ENCODE measurements at regions of chr2 and their contacts with region 1.

Region 1: GRCh38 chr2:8303322-8303832 is 378.5 kb upstream of the ID2 start:
- DNase-seq: peak; percentile 39
- ATAC-seq: peak; percentile 83
- H3K4me3 Mint-ChIP-seq: peak overlapping the region; percentile 38
- H3K27ac Mint-ChIP-seq: peak overlapping the region; percentile 59
- H3K4me1 Mint-ChIP-seq: peaks cover 43% of the 10 kb centered on the region
- H3K27me3 Mint-ChIP-seq: peaks cover 63% of the 10 kb centered on the region
- CTCF ChIP-seq: no peak

Region 2: DNA sequence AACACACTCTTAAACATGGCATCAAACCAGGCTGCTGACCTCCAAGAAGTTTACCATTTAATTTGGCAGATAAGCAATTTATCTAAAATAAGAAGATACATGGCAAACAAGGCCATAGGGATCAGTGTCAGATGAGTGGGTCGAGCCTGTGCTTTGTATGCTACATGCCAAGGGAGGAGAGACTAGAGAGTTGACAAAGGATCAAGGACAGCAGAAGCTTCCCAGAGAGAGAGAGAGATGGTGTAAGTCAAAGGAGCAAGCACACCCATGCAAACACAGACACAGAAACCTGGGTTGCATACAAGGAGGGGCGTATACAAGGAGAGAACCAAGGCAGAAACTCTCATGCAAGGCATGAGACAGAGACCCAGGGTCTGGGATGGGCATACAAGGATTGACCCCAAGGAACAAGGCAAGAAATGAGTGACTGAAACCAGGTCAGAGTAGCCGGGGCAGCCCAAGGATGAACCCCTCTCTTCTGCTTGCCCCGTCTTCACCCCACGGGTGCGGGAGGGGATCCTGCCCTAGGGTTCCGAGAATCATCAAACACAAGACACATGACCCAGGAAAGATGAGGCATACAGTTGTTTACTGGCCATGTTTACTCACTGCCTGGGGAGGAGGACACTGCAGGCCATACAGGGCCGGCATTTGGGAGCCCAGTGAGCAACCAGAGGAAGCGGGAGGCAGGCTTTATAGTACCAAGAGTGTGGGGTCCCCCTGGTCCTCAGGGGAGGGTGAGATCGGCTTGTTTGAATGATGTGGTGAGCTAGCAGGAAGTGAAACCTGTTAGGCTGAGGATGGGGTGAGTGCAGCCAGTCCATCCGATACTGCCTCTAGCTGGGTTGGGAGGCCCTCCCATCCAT is 150.8 kb before region 1 on chr2:
- CTCF ChIA-PET with region 1: no interaction called
- POLR2A ChIA-PET with region 1: no interaction called
- intact Hi-C with region 1: loop called (anchors 2 kb)
- DNase-seq: no peak
- ATAC-seq: peak; percentile 87
- H3K4me3 Mint-ChIP-seq: no peak overlapping the region
- H3K27ac Mint-ChIP-seq: no peak overlapping the region
- H3K4me1 Mint-ChIP-seq: peaks cover 19% of the 10 kb centered on the region
- H3K27me3 Mint-ChIP-seq: peaks cover 32% of the 10 kb centered on the region
- CTCF ChIP-seq: no peak

Region 3: GRCh38 chr2:8239531-8240088 is 63.8 kb before region 1 on chr2:
- CTCF ChIA-PET with region 1: no interaction called
- POLR2A ChIA-PET with region 1: no interaction called
- intact Hi-C with region 1: no loop called
- DNase-seq: no peak
- ATAC-seq: no peak
- H3K4me3 Mint-ChIP-seq: no peak overlapping the region
- H3K27ac Mint-ChIP-seq: no peak overlapping the region
- H3K4me1 Mint-ChIP-seq: peaks cover 10% of the 10 kb centered on the region
- H3K27me3 Mint-ChIP-seq: peaks cover 54% of the 10 kb centered on the region
- CTCF ChIP-seq: no peak

Region 4: GRCh38 chr2:8583400-8584173 is 280.2 kb after region 1 on chr2:
- CTCF ChIA-PET with region 1: no interaction called
- POLR2A ChIA-PET with region 1: no interaction called
- intact Hi-C with region 1: loop called (anchors 2 kb)
- DNase-seq: peak; percentile 80
- ATAC-seq: peak; percentile 94
- H3K4me3 Mint-ChIP-seq: peak overlapping the region; percentile 64
- H3K27ac Mint-ChIP-seq: peak overlapping the region; percentile 27
- H3K4me1 Mint-ChIP-seq: peaks cover 47% of the 10 kb centered on the region
- H3K27me3 Mint-ChIP-seq: peaks cover 18% of the 10 kb centered on the region
- CTCF ChIP-seq: no peak

Region 5: GRCh38 chr2:10043906-10044601 is 1740.7 kb after region 1 on chr2:
- CTCF ChIA-PET with region 1: no interaction called
- POLR2A ChIA-PET with region 1: no interaction called
- intact Hi-C with region 1: no loop called
- DNase-seq: peak; percentile 88
- ATAC-seq: peak; percentile 68
- H3K4me3 Mint-ChIP-seq: peak overlapping the region; percentile 76
- H3K27ac Mint-ChIP-seq: peak overlapping the region; percentile 72
- H3K4me1 Mint-ChIP-seq: peaks cover 26% of the 10 kb centered on the region
- H3K27me3 Mint-ChIP-seq: no peaks in the 10 kb centered on the region
- CTCF ChIP-seq: no peak

Measured in activated B cell treated with CpG ODN at 0.5 μM for 24 hours (primary cell).